ENCODE measurements at regions of chr14 and their contacts with region 1.

Region 1: DNA sequence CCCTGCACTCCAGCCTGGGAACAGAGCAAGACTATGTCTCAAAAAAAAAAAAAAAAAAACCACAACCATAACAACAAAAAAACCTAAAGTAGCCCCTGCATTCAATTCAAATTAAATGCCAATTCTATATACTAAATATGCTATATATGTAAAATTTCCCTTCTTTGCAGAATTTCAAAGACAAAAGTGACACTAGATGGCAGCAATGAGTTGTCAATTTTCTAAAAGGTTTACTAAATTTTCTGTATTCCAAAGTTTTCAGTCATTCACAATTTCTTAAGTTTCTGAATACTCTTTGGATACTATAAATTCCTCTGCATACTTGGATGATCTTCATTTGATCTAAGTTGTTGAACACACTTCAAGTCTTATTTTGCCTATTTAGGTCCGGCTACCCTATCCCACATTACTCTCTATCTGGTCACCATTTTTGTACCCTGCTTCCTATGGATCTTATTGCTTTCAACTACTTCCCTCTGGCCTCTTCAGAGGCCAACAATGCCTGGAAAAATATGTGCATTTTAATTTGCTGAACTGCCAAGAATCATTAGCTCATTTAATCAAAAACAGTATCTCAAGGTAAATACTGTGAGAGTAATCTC is 27.9 kb downstream of the HNRNPC start:
- DNase-seq: no peak
- H3K4me3 Mint-ChIP-seq: no peak overlapping the region
- H3K27ac Mint-ChIP-seq: no peak overlapping the region
- H3K4me1 Mint-ChIP-seq: peaks cover 52% of the 10 kb centered on the region
- H3K27me3 Mint-ChIP-seq: no peaks in the 10 kb centered on the region

Region 2: DNA sequence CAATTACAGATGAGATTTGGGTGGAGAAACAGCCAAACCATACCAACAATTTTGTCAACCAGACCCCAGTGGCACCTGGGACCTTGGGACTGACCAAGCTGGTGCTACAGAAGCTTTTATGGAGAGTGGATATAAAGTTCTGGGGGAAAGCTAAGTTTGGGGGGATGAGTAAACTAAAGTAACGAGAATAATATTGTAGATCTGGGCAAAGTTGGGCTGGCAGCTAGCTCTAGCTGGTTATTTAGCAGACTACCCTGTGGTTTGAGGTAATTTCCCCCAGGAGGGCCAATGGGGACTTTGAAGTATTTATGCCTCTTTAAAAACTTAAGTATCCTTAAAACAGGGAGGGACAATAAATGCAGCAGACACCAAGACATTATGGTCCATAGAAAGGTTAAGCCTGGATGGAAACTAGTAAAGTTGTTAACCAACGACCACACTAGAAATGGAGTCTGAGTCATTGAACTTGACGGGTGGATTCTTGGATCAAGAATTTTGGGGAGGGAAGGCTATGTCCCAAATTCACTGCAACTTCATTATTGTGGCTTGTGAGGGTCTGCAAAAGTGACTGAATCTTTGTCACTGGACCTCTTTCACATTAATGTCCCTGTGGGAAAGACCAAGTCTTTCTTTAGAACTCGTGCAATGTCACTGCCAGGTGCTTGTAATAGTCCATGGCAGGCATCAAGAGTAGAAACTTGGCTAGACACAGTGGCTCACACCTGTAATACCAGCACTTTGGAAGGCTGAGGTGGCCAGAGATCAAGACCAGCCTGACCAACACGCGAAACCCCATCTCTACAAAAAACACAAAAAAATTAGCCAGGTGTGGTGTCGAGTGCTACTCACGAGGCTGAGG is 36.9 kb before region 1 on chr14:
- intact Hi-C with region 1: loop called (anchors 5 kb)
- DNase-seq: no peak
- H3K4me3 Mint-ChIP-seq: no peak overlapping the region
- H3K27ac Mint-ChIP-seq: peak overlapping the region; percentile 14
- H3K4me1 Mint-ChIP-seq: peaks cover 26% of the 10 kb centered on the region
- H3K27me3 Mint-ChIP-seq: no peaks in the 10 kb centered on the region

Region 3: GRCh38 chr14:21229821-21230220 is 11.5 kb before region 1 on chr14:
- intact Hi-C with region 1: no loop called
- DNase-seq: no peak
- H3K4me3 Mint-ChIP-seq: peak overlapping the region; percentile 66
- H3K27ac Mint-ChIP-seq: peak overlapping the region; percentile 74
- H3K4me1 Mint-ChIP-seq: peaks cover 57% of the 10 kb centered on the region
- H3K27me3 Mint-ChIP-seq: no peaks in the 10 kb centered on the region